Activated CD4-positive, alpha-beta T cell treated with anti-CD3 and anti-CD28 coated beads, Interleukin-2, amount 10 ng/mL, durations not matched to agents 7 days and 5 days (primary cell): ENCODE measurements at regions of chr1 and their contacts with region 1.

Region 1: DNA sequence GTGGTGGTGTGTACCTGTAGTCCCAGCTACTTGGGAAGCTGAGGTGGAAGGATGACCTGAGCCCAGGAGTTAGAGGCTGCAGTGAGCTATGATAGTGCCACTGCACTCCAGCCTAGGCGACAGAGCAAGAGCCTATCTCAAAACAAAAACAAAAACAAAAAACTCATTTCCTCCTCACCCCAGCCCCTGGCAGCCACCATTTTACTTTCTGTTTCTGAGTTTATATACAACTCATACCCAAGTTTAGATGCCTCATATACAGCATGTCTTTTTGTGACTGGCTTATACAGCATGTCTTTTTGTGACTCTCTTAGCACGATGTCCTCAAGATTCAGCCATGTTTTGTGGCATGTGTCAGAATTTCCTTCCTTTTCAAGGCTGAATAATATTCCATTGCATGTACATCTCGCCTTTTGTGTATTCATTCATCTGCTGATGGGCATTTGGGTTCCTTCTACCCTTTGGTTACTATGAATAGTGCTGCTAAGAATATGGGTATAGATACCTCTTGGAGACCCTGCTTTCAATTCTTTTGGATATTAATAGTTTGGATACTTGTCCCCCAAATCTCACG is 14.7 kb downstream of the COA7 start:
- DNase-seq: no peak
- H3K4me3 Mint-ChIP-seq: no peak overlapping the region
- H3K27ac Mint-ChIP-seq: peak overlapping the region; percentile 36
- H3K4me1 Mint-ChIP-seq: peaks cover 23% of the 10 kb centered on the region
- H3K27me3 Mint-ChIP-seq: no peaks in the 10 kb centered on the region

Region 2: DNA sequence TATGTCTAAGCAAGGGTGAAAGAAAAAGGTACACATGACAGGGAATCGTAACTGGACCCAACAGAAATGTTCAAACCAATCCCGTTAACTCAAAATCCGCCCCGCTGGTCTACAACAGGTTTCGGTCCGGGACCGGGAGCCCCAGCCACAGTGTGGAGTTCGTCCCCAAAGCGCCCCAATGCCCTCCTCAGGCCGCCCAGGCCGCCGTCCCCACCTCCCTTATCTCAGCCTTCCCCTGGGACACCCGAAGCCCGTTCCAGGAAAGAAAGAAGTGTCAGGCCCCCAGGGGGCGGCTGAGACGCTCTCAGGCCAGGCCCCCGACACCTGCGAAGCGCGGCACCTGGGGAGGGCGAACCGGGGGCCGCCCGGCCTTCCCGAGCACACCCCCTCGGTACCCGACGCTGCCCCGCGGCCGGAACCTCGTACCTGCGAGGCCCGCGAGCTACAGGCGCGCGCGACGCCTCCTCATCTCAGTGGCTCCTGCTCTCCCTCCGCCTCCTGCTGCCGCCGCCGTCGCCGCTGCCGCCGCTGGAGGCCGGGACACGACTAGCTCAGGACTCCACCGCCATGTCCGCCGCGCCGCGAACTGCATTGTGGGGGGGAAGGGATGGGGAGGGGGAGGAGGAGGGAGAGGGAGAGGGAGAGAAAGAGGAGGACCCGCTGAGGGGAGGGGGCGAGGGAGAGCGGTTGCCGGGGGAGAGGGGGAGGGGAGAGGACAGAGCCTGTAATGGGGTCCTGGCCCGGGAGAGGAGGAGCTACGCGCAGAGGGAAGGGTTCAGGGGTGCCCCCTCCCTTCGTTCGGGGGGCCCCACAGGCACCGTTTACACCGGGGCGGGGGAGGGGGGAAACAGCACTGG is 130.7 kb before region 1 on chr1 and contains the start of gene TUT4:
- CTCF ChIA-PET with region 1: interaction called, 3 read pairs
- POLR2A ChIA-PET with region 1: interaction called, 14 read pairs
- DNase-seq: peak; percentile 80
- H3K4me3 Mint-ChIP-seq: peak within 1 kb of the TSS; percentile 64
- H3K27ac Mint-ChIP-seq: peak within 1 kb of the TSS; percentile 82
- H3K4me1 Mint-ChIP-seq: peaks cover 29% of the 10 kb centered on the region
- H3K27me3 Mint-ChIP-seq: no peaks in the 10 kb centered on the region
- total RNA-seq, gene TUT4: 88.0 to 101 TPM

Region 3: DNA sequence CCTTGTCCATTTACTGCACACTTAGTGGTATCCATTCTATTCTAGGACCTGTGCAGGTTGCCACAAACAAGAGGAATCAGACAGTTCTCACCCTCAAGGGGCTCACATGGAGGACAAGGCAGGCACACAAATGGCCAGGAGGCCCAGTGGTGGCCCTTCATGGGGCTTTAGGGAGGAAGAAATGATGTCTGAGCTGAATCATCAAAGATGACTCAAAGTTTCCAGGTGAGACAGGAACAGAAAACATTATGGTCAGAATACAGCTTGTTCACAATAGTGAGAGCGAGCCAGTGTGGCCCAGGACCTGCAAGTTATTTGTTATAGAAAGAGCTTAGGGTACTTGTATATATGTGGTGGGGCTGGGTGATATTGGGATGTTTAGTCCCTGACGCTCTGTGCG is 24.1 kb before region 1 on chr1:
- CTCF ChIA-PET with region 1: interaction called, 12 read pairs
- POLR2A ChIA-PET with region 1: no interaction called
- DNase-seq: no peak
- H3K4me3 Mint-ChIP-seq: no peak overlapping the region
- H3K27ac Mint-ChIP-seq: no peak overlapping the region
- H3K4me1 Mint-ChIP-seq: peaks cover 22% of the 10 kb centered on the region
- H3K27me3 Mint-ChIP-seq: no peaks in the 10 kb centered on the region

Region 4: GRCh38 chr1:52697795-52698674 is 14.6 kb after region 1 on chr1 and contains the start of gene COA7:
- CTCF ChIA-PET with region 1: interaction called, 15 read pairs
- POLR2A ChIA-PET with region 1: no interaction called
- DNase-seq: peak; percentile 66
- H3K4me3 Mint-ChIP-seq: peak within 1 kb of the TSS; percentile 92
- H3K27ac Mint-ChIP-seq: peak within 1 kb of the TSS; percentile 88
- H3K4me1 Mint-ChIP-seq: peaks cover 39% of the 10 kb centered on the region
- H3K27me3 Mint-ChIP-seq: peaks cover 9% of the 10 kb centered on the region
- total RNA-seq, gene COA7: 10.8 to 14.6 TPM